T-cell (primary cell): ENCODE measurements at regions of chr3 and their contacts with region 1.

Region 1: GRCh38 chr3:60622349-60622748 is 628.9 kb downstream of the FHIT start:
- DNase-seq: no peak
- ATAC-seq: no peak
- H3K4me3 ChIP-seq: no peak overlapping the region
- H3K4me3 Mint-ChIP-seq: no peak overlapping the region
- H3K27ac ChIP-seq: no peak overlapping the region
- H3K27ac Mint-ChIP-seq: no peak overlapping the region
- H3K4me1 ChIP-seq: no peaks in the 10 kb centered on the region
- H3K4me1 Mint-ChIP-seq: no peaks in the 10 kb centered on the region
- H3K27me3 ChIP-seq: no peaks in the 10 kb centered on the region
- H3K27me3 Mint-ChIP-seq: no peaks in the 10 kb centered on the region

Region 2: GRCh38 chr3:60153221-60153999 is 468.9 kb before region 1 on chr3:
- CTCF ChIA-PET with region 1: interaction called in 1 of 2 experiments, 11 read pairs
- POLR2A ChIA-PET with region 1: no interaction called
- DNase-seq: no peak
- ATAC-seq: no peak
- H3K4me3 ChIP-seq: no peak overlapping the region
- H3K4me3 Mint-ChIP-seq: no peak overlapping the region
- H3K27ac ChIP-seq: no peak overlapping the region
- H3K27ac Mint-ChIP-seq: no peak overlapping the region
- H3K4me1 ChIP-seq: no peaks in the 10 kb centered on the region
- H3K4me1 Mint-ChIP-seq: no peaks in the 10 kb centered on the region
- H3K27me3 ChIP-seq: no peaks in the 10 kb centered on the region
- H3K27me3 Mint-ChIP-seq: no peaks in the 10 kb centered on the region